Adrenal gland (tissue), 19 donors: ENCODE measurements at regions of chr2 and their contacts with region 1.

Region 1: GRCh38 chr2:1591978-1592907 is 152.1 kb downstream of the PXDN start:
- DNase-seq: peak in 6 of 7 donors; percentile 32 to 67 (median 42)
- H3K4me3 ChIP-seq: no peak overlapping the region
- H3K27ac ChIP-seq: peak overlapping the region in 1 of 5 donors; percentile 69
- H3K4me1 ChIP-seq: peaks cover 0 to 9% of the 10 kb centered on the region in 2 donors
- H3K27me3 ChIP-seq: no peaks in the 10 kb centered on the region
- CTCF ChIP-seq: peak in 4 of 6 experiments; percentile 30 to 61 (median 42)
- POLR2A ChIP-seq: no peak

Region 2: GRCh38 chr2:1024981-1025380 is 567.3 kb before region 1 on chr2:
- intact Hi-C with region 1: no loop called
- DNase-seq: no peak
- H3K4me3 ChIP-seq: no peak overlapping the region
- H3K27ac ChIP-seq: no peak overlapping the region
- H3K4me1 ChIP-seq: no peaks in the 10 kb centered on the region
- H3K27me3 ChIP-seq: no peaks in the 10 kb centered on the region
- CTCF ChIP-seq: no peak
- POLR2A ChIP-seq: no peak

Region 3: DNA sequence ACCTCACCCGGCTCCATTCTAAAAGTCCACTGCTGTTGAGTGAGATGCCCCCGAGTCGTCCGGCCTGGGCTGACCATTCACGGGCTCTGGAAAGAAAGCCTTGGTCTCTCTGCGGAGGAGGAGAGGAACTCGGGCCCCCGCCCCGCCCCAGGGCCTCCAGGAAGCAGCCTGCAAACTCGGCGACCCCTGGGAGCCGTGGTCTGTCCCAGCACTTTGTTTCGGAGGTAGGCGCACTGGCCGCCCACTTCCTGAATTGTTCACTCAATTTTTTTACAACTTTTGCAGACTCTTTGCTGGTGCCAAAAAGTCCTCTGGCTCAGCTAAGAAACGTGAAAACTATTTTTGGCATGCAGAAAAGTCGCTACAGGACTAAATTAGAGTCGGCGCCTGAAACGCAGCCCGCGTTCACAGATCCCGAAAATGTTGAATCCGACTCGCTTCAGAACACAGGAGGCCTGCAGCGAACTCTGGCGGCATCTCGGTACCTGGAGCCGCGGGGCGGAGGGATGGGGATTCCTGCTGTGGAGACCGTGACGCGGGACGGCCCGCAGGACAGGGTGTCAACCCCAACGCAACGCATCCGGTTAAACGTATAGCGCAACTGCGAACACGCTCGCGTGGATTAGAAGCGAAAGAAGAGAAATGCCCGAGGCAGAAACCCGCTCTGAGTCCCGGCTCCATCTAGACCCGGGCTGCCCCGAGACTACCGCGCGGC is 150.6 kb after region 1 on chr2:
- intact Hi-C with region 1: loop called in 1 of 2 experiments (anchors 10 kb)
- DNase-seq: peak in 5 of 7 donors; percentile 25 to 72 (median 44)
- H3K4me3 ChIP-seq: peak overlapping the region in 1 of 4 donors; percentile 61
- H3K27ac ChIP-seq: peak overlapping the region in 4 of 5 donors; percentile 32 to 90 (median 64)
- H3K4me1 ChIP-seq: no peaks in the 10 kb centered on the region
- H3K27me3 ChIP-seq: no peaks in the 10 kb centered on the region
- CTCF ChIP-seq: peak in 2 of 6 experiments; percentile 17 to 18
- POLR2A ChIP-seq: no peak